Naive thymus-derived CD4-positive, alpha-beta T cell (primary cell): ENCODE measurements at regions of chr16 and their contacts with region 1.

Region 1: GRCh38 chr16:4957720-4958509 is at the start of gene SEC14L5:
- DNase-seq: peak; percentile 87 to 96 (median 89)
- ATAC-seq: peak; percentile 99
- H3K4me3 ChIP-seq: peak within 1 kb of the TSS; percentile 59
- H3K4me3 Mint-ChIP-seq: peak within 1 kb of the TSS; percentile 79 to 96 (median 89)
- H3K27ac ChIP-seq: peak within 1 kb of the TSS; percentile 26
- H3K27ac Mint-ChIP-seq: peak within 1 kb of the TSS in 6 of 9 donors; percentile 30 to 80 (median 53)
- H3K4me1 ChIP-seq: peaks cover 6 to 13% of the 10 kb centered on the region in 2 donors
- H3K4me1 Mint-ChIP-seq: peaks cover 15 to 30% (median 23%) of the 10 kb centered on the region in 7 donors
- H3K27me3 ChIP-seq: peaks cover 0 to 7% of the 10 kb centered on the region in 2 donors
- H3K27me3 Mint-ChIP-seq: peaks cover 10 to 35% (median 31%) of the 10 kb centered on the region in 5 donors
- total RNA-seq, gene SEC14L5: 0.21 to 1.0 TPM in 2 of 5 experiments, not detected in the others

Region 2: DNA sequence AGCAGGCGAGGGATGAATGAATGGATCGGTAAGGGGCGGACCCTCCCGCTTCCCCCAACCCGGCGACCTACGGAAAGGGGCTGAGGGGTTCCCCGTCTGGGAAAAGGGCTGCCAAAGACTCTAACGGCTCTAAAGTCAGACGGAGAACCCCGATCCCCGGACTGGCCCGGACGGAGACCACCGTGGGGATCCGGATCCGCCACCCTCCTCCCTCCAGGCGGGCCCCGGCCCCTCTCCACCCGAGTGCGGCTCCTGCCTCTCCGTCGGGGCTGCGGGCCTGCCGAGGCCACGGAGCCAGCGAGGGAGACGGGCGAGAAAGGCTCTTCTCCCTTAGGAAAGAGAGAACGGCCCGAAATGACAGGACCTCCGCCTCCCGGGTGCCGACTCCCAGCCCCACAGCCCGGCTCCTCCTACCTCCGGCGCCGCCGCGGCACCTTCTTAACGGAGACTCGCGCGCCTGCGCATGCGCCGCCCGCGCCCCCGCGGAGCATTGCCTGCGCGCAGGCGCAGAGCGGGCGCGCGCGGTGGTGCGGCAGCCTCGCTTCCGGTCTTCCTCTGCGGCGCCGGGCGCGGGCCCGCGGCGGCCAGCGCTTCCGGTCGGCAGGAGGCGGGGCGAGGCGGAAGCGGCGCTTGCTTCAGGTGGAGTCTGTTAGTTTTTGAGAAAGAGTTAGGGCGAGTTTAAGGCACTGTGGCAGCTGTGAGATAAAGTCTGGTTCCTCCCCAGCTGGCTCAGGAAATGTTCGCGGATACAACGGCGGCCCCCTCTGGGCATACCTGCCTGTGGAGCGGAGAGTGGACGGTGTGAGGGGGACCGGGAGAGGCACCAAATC is 1346.6 kb before region 1 on chr16 and contains the start of gene SLX4:
- CTCF ChIA-PET with region 1: no interaction called
- POLR2A ChIA-PET with region 1: no interaction called
- intact Hi-C with region 1: loop called in 1 of 2 experiments (anchors 5 kb)
- DNase-seq: peak; percentile 88 to 97 (median 95)
- ATAC-seq: peak; percentile 92
- H3K4me3 ChIP-seq: peak within 1 kb of the TSS; percentile 99
- H3K4me3 Mint-ChIP-seq: peak within 1 kb of the TSS; percentile 93 to 100 (median 99)
- H3K27ac ChIP-seq: peak within 1 kb of the TSS; percentile 90
- H3K27ac Mint-ChIP-seq: peak within 1 kb of the TSS; percentile 92 to 99 (median 98)
- H3K4me1 ChIP-seq: peaks cover 18 to 21% of the 10 kb centered on the region in 2 donors
- H3K4me1 Mint-ChIP-seq: peaks cover 37 to 70% (median 62%) of the 10 kb centered on the region in 7 donors
- H3K27me3 ChIP-seq: no peaks in the 10 kb centered on the region
- H3K27me3 Mint-ChIP-seq: no peaks in the 10 kb centered on the region
- total RNA-seq, gene SLX4: 7.1 to 12.5 (median 8.5) TPM

Region 3: GRCh38 chr16:4358831-4359561 is 598.9 kb before region 1 on chr16:
- CTCF ChIA-PET with region 1: no interaction called
- POLR2A ChIA-PET with region 1: no interaction called
- intact Hi-C with region 1: loop called in 1 of 2 experiments (anchors 1 kb)
- DNase-seq: peak; percentile 43 to 76 (median 61)
- ATAC-seq: peak; percentile 81
- H3K4me3 ChIP-seq: no peak overlapping the region
- H3K4me3 Mint-ChIP-seq: no peak overlapping the region
- H3K27ac ChIP-seq: no peak overlapping the region
- H3K27ac Mint-ChIP-seq: peak overlapping the region in 6 of 9 donors; percentile 37 to 94 (median 62)
- H3K4me1 ChIP-seq: no peaks in the 10 kb centered on the region
- H3K4me1 Mint-ChIP-seq: peaks cover 0 to 11% (median 0%) of the 10 kb centered on the region in 7 donors
- H3K27me3 ChIP-seq: no peaks in the 10 kb centered on the region
- H3K27me3 Mint-ChIP-seq: no peaks in the 10 kb centered on the region

Region 4: GRCh38 chr16:4538350-4539235 is 419.3 kb before region 1 on chr16 and contains the start of gene CDIP1:
- CTCF ChIA-PET with region 1: no interaction called
- POLR2A ChIA-PET with region 1: no interaction called
- intact Hi-C with region 1: loop called in 1 of 2 experiments (anchors 5 kb)
- DNase-seq: peak; percentile 85 to 93 (median 90)
- ATAC-seq: peak; percentile 92
- H3K4me3 ChIP-seq: peak within 1 kb of the TSS; percentile 81
- H3K4me3 Mint-ChIP-seq: peak within 1 kb of the TSS; percentile 66 to 91 (median 82)
- H3K27ac ChIP-seq: peak within 1 kb of the TSS; percentile 96
- H3K27ac Mint-ChIP-seq: peak within 1 kb of the TSS; percentile 78 to 97 (median 92)
- H3K4me1 ChIP-seq: peaks cover 10 to 33% of the 10 kb centered on the region in 2 donors
- H3K4me1 Mint-ChIP-seq: peaks cover 24 to 44% (median 40%) of the 10 kb centered on the region in 7 donors
- H3K27me3 ChIP-seq: no peaks in the 10 kb centered on the region
- H3K27me3 Mint-ChIP-seq: peaks cover 0 to 9% (median 0%) of the 10 kb centered on the region in 5 donors
- total RNA-seq, gene CDIP1: 28.1 to 41.1 (median 31.0) TPM

Region 5: DNA sequence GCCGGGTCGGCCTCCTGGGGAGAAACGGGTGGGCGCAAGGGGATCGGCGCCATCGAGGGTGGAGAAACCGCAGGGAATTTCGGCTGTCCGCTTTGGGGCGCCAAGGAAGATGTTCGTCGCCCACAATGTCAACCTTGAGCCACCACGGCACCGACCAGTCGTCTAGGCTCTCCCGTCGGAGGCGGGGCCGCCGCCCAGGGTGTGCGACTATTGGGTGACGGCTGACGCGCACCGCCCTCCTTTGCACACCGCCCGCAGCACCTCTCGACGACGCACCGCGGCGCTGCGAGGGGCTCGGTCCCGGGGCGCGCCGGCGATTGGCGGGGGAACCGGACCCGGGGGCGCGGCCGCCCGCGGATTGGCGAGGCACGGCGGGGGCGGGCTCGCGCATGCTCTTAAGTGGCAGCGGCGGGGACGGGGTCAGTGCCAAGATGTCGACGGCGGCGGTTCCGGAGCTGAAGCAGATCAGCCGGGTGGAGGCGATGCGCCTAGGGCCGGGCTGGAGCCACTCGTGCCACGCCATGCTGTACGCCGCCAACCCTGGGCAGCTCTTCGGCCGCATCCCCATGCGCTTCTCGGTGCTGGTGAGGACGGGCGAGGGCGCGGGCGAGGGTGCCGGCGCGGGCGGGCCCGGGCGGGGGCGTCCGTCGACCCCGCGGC is 264.5 kb before region 1 on chr16 and contains the start of gene NUDT16L1:
- CTCF ChIA-PET with region 1: interaction called, 3 read pairs
- POLR2A ChIA-PET with region 1: no interaction called
- intact Hi-C with region 1: loop called in 1 of 2 experiments (anchors 10 kb)
- DNase-seq: peak; percentile 95 to 99 (median 98)
- ATAC-seq: peak; percentile 97
- H3K4me3 ChIP-seq: peak within 1 kb of the TSS; percentile 93
- H3K4me3 Mint-ChIP-seq: peak within 1 kb of the TSS; percentile 78 to 91 (median 86)
- H3K27ac ChIP-seq: peak within 1 kb of the TSS; percentile 93
- H3K27ac Mint-ChIP-seq: peak within 1 kb of the TSS; percentile 73 to 93 (median 88)
- H3K4me1 ChIP-seq: peaks cover 14% of the 10 kb centered on the region in 2 donors
- H3K4me1 Mint-ChIP-seq: peaks cover 8 to 23% (median 14%) of the 10 kb centered on the region in 7 donors
- H3K27me3 ChIP-seq: no peaks in the 10 kb centered on the region
- H3K27me3 Mint-ChIP-seq: no peaks in the 10 kb centered on the region
- total RNA-seq, gene NUDT16L1: 42.8 to 65.4 (median 53.3) TPM

Region 6: GRCh38 chr16:4846891-4847773 is 110.8 kb before region 1 on chr16 and contains the starts of genes GLYR1 and UBN1:
- CTCF ChIA-PET with region 1: no interaction called
- POLR2A ChIA-PET with region 1: no interaction called
- intact Hi-C with region 1: loop called (anchors 1 kb)
- DNase-seq: peak; percentile 99 to 100 (median 99)
- ATAC-seq: peak; percentile 95
- H3K4me3 ChIP-seq: peak within 1 kb of the TSS; percentile 84
- H3K4me3 Mint-ChIP-seq: peak within 1 kb of the TSS; percentile 86 to 96 (median 91)
- H3K27ac ChIP-seq: peak within 1 kb of the TSS; percentile 99
- H3K27ac Mint-ChIP-seq: peak within 1 kb of the TSS; percentile 74 to 94 (median 90)
- H3K4me1 ChIP-seq: peaks cover 30 to 38% of the 10 kb centered on the region in 2 donors
- H3K4me1 Mint-ChIP-seq: peaks cover 52 to 66% (median 58%) of the 10 kb centered on the region in 7 donors
- H3K27me3 ChIP-seq: no peaks in the 10 kb centered on the region
- H3K27me3 Mint-ChIP-seq: no peaks in the 10 kb centered on the region
- total RNA-seq, gene GLYR1: 98.7 to 122 (median 108) TPM
- total RNA-seq, gene UBN1: 39.5 to 58.7 (median 42.4) TPM

Region 7: GRCh38 chr16:4882633-4883285 is 75.2 kb before region 1 on chr16:
- CTCF ChIA-PET with region 1: no interaction called
- POLR2A ChIA-PET with region 1: no interaction called
- intact Hi-C with region 1: no loop called
- DNase-seq: no peak
- ATAC-seq: no peak
- H3K4me3 ChIP-seq: no peak overlapping the region
- H3K4me3 Mint-ChIP-seq: no peak overlapping the region
- H3K27ac ChIP-seq: no peak overlapping the region
- H3K27ac Mint-ChIP-seq: peak overlapping the region in 1 of 9 donors; percentile 29
- H3K4me1 ChIP-seq: no peaks in the 10 kb centered on the region
- H3K4me1 Mint-ChIP-seq: peaks cover 0 to 11% (median 0%) of the 10 kb centered on the region in 7 donors
- H3K27me3 ChIP-seq: no peaks in the 10 kb centered on the region
- H3K27me3 Mint-ChIP-seq: no peaks in the 10 kb centered on the region